CD4-positive, alpha-beta memory T cell (primary cell): ENCODE measurements at regions of chr10 and their contacts with region 1.

Region 1: DNA sequence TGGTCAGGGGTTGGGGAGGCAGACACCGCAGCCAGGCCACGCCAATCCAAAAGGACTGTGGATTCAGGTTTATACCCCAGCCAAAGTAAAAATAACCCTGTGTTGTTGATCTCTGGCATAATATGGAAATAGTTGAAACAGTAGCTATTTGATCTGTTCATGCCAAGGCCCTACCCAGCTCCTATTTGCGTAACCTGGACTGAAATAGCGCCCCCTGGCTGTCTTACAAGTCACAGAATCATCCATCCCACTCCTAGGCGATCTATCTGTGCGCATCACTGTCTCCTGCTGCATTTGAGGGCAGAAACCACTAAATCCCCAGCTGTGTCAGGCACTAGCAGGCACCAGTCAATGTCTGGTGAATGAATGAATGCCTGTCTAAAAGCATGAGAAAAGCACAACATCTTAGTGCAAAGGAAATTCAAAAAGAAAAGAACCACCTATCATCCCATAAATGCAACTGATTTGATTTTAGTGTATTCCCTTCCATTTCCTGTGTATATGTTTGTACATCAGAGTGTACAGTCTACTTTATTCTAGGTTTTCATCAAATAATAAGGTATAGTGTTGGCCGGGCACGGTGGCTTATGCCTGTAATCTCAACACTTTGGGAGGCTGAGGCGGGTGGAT is 160.0 kb downstream of the SLIT1 start:
- DNase-seq: peak in 4 of 5 donors; percentile 30 to 39 (median 34)
- H3K4me3 ChIP-seq: no peak overlapping the region
- H3K4me3 Mint-ChIP-seq: no peak overlapping the region
- H3K27ac ChIP-seq: no peak overlapping the region
- H3K27ac Mint-ChIP-seq: no peak overlapping the region
- H3K4me1 ChIP-seq: no peaks in the 10 kb centered on the region
- H3K4me1 Mint-ChIP-seq: no peaks in the 10 kb centered on the region
- H3K27me3 ChIP-seq: no peaks in the 10 kb centered on the region
- H3K27me3 Mint-ChIP-seq: peaks cover 0 to 3% of the 10 kb centered on the region in 2 donors

Region 2: DNA sequence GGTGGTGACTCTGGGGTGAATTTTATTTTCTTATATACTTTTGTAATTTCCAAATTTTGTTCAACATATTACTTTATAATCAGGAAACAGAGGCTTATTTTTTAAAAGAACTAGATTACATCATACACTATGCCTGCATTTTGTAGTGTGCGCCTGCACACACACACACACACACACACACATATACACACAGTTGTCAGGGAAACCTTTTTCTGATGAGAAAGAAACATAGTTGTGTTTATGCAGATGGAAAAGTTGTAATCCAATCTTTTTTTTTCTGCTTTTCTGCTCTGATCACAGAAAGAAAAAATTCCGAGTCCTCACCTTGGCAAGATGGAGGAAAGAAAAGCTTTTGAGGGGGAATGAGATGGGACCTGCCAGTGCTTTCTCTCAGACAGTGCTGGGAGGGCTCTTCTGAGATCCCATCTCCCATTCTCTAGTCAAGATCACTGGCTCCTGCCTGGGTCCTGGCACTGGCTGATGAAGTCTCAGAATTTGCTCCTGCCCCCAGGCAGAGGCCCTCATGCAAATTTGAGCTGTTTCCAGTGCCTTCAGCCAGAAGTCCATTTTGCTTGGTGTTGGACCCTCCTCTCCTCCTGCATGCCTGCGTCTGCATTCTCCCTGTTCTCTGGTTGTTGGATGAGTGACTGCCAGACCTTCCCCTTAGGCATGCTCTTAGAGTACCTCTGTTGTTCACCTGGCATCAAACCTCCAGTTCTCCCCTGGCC is 571.7 kb before region 1 on chr10:
- CTCF ChIA-PET with region 1: no interaction called
- POLR2A ChIA-PET with region 1: no interaction called
- intact Hi-C with region 1: no loop called
- DNase-seq: no peak
- H3K4me3 ChIP-seq: no peak overlapping the region
- H3K4me3 Mint-ChIP-seq: no peak overlapping the region
- H3K27ac ChIP-seq: no peak overlapping the region
- H3K27ac Mint-ChIP-seq: no peak overlapping the region
- H3K4me1 ChIP-seq: no peaks in the 10 kb centered on the region
- H3K4me1 Mint-ChIP-seq: no peaks in the 10 kb centered on the region
- H3K27me3 ChIP-seq: no peaks in the 10 kb centered on the region
- H3K27me3 Mint-ChIP-seq: peaks cover 5 to 6% of the 10 kb centered on the region in 2 donors

Region 3: DNA sequence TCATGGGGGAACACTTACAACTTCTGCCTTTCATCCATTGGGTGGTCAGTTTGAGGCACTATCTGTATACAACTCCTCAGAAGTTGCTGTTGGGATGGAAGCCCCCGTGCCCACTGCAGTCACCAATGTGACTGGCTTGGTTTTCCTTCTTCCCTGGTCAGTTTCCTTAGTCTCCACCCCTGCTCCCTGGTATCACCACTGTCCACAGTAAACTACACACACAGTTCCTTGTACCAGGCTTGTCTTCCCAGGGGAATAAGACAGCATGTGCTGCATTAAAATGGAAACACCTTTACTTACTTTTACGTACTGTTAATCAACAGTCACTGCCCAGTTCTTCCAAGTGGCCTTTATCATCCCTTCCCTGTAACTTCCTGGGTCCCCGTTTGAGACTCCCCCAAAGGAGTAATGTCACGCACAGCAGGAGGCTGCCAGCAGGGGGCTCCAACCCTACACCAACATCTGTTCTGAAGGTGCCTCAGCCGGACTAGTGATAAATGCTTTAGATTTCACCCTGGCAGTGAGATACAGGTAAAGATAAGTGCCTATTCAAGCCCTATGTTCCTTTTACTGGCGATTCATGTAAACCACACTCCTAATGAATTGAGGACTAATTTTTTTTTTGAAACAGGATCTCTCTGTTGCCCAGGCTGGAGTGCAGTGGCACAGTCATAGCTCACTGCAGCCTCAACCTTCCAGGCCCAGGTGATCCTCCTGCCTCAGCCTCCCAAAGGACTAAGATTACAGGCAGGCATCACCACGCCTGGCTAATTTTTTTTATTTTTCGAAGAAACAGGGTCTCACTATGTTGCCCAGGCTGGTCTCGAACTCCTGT is 260.1 kb before region 1 on chr10:
- CTCF ChIA-PET with region 1: interaction called, 14 read pairs
- POLR2A ChIA-PET with region 1: no interaction called
- intact Hi-C with region 1: no loop called
- DNase-seq: peak; percentile 43 to 70 (median 63)
- H3K4me3 ChIP-seq: no peak overlapping the region
- H3K4me3 Mint-ChIP-seq: no peak overlapping the region
- H3K27ac ChIP-seq: no peak overlapping the region
- H3K27ac Mint-ChIP-seq: peak overlapping the region in 2 of 7 donors; percentile 35 to 49
- H3K4me1 ChIP-seq: no peaks in the 10 kb centered on the region
- H3K4me1 Mint-ChIP-seq: peaks cover 0 to 4% (median under 1%) of the 10 kb centered on the region in 4 donors
- H3K27me3 ChIP-seq: no peaks in the 10 kb centered on the region
- H3K27me3 Mint-ChIP-seq: peaks cover 0 to 1% of the 10 kb centered on the region in 2 donors